ENCODE measurements at regions of chr9 and their contacts with region 1.

Region 1: GRCh38 chr9:24071716-24072115 is 245.7 kb upstream of the ELAVL2 start:
- DNase-seq: no peak
- H3K4me3 ChIP-seq: no peak overlapping the region
- H3K27ac ChIP-seq: no peak overlapping the region
- H3K4me1 ChIP-seq: no peaks in the 10 kb centered on the region
- H3K27me3 ChIP-seq: no peaks in the 10 kb centered on the region
- CTCF ChIP-seq: no peak
- POLR2A ChIP-seq: no peak

Region 2: GRCh38 chr9:24090566-24090965 is 18.9 kb after region 1 on chr9:
- intact Hi-C with region 1: loop called (anchors 2 kb)
- DNase-seq: no peak
- H3K4me3 ChIP-seq: no peak overlapping the region
- H3K27ac ChIP-seq: no peak overlapping the region
- H3K4me1 ChIP-seq: no peaks in the 10 kb centered on the region
- H3K27me3 ChIP-seq: no peaks in the 10 kb centered on the region
- CTCF ChIP-seq: no peak
- POLR2A ChIP-seq: no peak

Region 3: GRCh38 chr9:24118190-24118589 is 46.5 kb after region 1 on chr9:
- intact Hi-C with region 1: no loop called
- DNase-seq: no peak
- H3K4me3 ChIP-seq: no peak overlapping the region
- H3K27ac ChIP-seq: no peak overlapping the region
- H3K4me1 ChIP-seq: no peaks in the 10 kb centered on the region
- H3K27me3 ChIP-seq: no peaks in the 10 kb centered on the region
- CTCF ChIP-seq: no peak
- POLR2A ChIP-seq: no peak

Region 4: DNA sequence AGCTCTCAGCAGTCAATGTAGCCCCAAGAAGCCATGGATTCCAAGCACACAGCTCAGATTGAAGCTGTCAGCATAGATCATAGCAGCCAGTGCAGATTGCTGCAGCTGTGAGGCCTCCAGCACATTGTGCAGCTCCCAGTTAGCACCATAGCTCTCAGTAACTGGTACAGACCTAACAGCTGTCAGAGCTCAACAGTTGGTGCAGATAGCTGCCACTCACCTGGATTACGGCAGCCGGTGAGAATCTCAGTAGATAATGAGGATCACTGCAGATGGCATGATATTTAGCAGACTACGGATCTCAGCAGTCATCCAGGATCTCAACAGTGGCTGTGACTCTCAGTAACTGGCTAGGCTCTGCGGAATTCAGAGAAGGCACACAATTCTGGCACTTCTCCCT is 1106.1 kb after region 1 on chr9:
- intact Hi-C with region 1: no loop called
- DNase-seq: no peak
- H3K4me3 ChIP-seq: no peak overlapping the region
- H3K27ac ChIP-seq: no peak overlapping the region
- H3K4me1 ChIP-seq: no peaks in the 10 kb centered on the region
- H3K27me3 ChIP-seq: no peaks in the 10 kb centered on the region
- CTCF ChIP-seq: no peak
- POLR2A ChIP-seq: no peak

Measured in breast epithelium (tissue), 4 donors.